ENCODE measurements at regions of chr5 and their contacts with region 1.

Region 1: DNA sequence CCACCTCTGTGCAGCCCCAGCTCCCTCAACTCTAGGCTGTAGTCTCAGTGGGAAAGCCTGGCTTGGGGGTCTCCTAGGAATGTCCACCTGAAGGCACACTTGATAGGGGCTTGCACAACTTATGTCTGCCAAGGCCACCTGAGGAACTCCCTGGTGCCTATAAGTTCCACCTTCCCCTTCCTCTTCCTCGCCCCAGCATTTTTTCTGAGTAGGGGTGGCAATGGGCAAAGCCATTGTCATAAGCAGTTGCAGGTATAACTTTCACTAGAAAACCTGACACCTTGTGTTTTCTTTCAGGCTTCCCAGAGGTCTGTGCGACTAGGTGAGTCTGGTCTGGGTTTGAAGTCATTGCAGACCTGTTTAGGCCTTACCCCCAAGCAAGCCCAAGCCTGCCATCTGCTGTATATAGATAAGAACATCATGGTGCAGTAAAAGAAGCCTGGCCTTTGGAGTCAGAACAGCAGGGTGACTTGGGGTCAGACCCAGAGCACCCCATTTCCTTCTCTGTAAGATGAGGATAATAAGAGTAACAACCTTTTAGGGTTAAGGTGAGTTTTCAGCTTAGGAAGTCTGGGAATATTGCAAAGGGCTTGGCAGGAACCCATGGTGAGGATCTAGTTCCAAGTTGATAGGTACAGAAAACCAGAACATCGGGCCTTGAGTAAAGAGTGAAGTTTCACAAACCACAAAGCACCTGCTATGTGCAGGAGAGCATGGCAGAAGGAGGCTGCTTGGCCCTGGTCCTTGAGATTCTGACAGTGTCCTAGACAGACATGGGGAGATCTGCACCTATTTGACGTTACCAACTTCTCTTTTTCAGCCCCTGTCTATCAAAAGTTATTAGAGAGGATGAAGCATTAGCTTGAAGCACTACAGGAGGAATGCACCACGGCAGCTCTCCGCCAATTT is 33.8 kb downstream of the TGFBI start:
- DNase-seq: peak; percentile 79
- H3K4me3 Mint-ChIP-seq: no peak overlapping the region
- H3K27ac Mint-ChIP-seq: no peak overlapping the region
- H3K4me1 Mint-ChIP-seq: peaks cover 27% of the 10 kb centered on the region
- H3K27me3 Mint-ChIP-seq: no peaks in the 10 kb centered on the region
- CTCF ChIP-seq: peak; percentile 80

Region 2: GRCh38 chr5:135937245-135937915 is 125.2 kb before region 1 on chr5:
- CTCF ChIA-PET with region 1: interaction called, 26 read pairs
- POLR2A ChIA-PET with region 1: interaction called, 14 read pairs
- intact Hi-C with region 1: no loop called
- DNase-seq: no peak
- H3K4me3 Mint-ChIP-seq: no peak overlapping the region
- H3K27ac Mint-ChIP-seq: no peak overlapping the region
- H3K4me1 Mint-ChIP-seq: no peaks in the 10 kb centered on the region
- H3K27me3 Mint-ChIP-seq: peaks cover 34% of the 10 kb centered on the region
- CTCF ChIP-seq: no peak

Region 3: DNA sequence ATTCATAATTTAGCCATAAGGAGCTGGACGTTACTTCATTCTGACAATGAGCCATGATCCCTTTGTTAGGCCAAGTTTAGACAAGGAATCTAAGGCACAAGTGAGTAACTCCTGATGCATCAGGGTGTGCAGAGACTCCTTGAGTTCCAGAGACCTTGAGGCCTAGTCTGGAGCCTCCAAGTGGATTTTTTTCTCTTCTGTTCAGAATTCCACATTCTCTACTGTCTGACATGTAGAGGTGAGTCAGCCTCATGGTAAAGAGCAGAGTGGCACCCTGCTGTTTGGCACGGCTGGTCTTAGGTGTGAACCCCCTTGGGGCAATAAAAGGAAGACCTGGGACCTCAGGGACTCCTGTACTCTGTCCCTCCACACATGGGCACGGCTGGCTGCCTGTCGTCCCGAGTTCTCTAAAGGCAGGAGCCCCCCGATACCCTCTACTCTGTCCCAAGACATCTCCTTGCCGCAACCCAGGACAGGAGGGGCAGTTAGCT is 55.8 kb before region 1 on chr5:
- CTCF ChIA-PET with region 1: interaction called, 8 read pairs
- POLR2A ChIA-PET with region 1: interaction called, 5 read pairs
- intact Hi-C with region 1: loop called (anchors 2 kb)
- DNase-seq: peak; percentile 99
- H3K4me3 Mint-ChIP-seq: peak overlapping the region; percentile 15
- H3K27ac Mint-ChIP-seq: peak overlapping the region; percentile 93
- H3K4me1 Mint-ChIP-seq: peaks cover 51% of the 10 kb centered on the region
- H3K27me3 Mint-ChIP-seq: no peaks in the 10 kb centered on the region
- CTCF ChIP-seq: no peak

Region 4: GRCh38 chr5:136042665-136043121 is 19.9 kb before region 1 on chr5:
- CTCF ChIA-PET with region 1: interaction called, 13 read pairs
- POLR2A ChIA-PET with region 1: interaction called, 364 read pairs
- intact Hi-C with region 1: no loop called
- DNase-seq: no peak
- H3K4me3 Mint-ChIP-seq: no peak overlapping the region
- H3K27ac Mint-ChIP-seq: peak overlapping the region; percentile 75
- H3K4me1 Mint-ChIP-seq: peaks cover 32% of the 10 kb centered on the region
- H3K27me3 Mint-ChIP-seq: no peaks in the 10 kb centered on the region
- CTCF ChIP-seq: no peak

Region 5: GRCh38 chr5:136356747-136357469 is 294.3 kb after region 1 on chr5:
- CTCF ChIA-PET with region 1: no interaction called
- POLR2A ChIA-PET with region 1: no interaction called
- intact Hi-C with region 1: no loop called
- DNase-seq: no peak
- H3K4me3 Mint-ChIP-seq: no peak overlapping the region
- H3K27ac Mint-ChIP-seq: no peak overlapping the region
- H3K4me1 Mint-ChIP-seq: no peaks in the 10 kb centered on the region
- H3K27me3 Mint-ChIP-seq: peaks cover 52% of the 10 kb centered on the region
- CTCF ChIP-seq: no peak

Region 6: GRCh38 chr5:136399527-136399926 is 336.9 kb after region 1 on chr5:
- CTCF ChIA-PET with region 1: no interaction called
- POLR2A ChIA-PET with region 1: no interaction called
- intact Hi-C with region 1: no loop called
- DNase-seq: peak; percentile 11
- H3K4me3 Mint-ChIP-seq: no peak overlapping the region
- H3K27ac Mint-ChIP-seq: no peak overlapping the region
- H3K4me1 Mint-ChIP-seq: no peaks in the 10 kb centered on the region
- H3K27me3 Mint-ChIP-seq: peaks cover 87% of the 10 kb centered on the region
- CTCF ChIP-seq: no peak